ENCODE measurements at regions of chr2 and their contacts with region 1.

Region 1: GRCh38 chr2:240189686-240190085 is 49.2 kb upstream of the OTOS start:
- DNase-seq: no peak
- ATAC-seq: no peak
- H3K4me3 ChIP-seq: no peak overlapping the region
- H3K27ac ChIP-seq: no peak overlapping the region
- H3K4me1 ChIP-seq: peaks cover 3 to 15% of the 10 kb centered on the region in 2 donors
- H3K27me3 ChIP-seq: no peaks in the 10 kb centered on the region
- CTCF ChIP-seq: no peak
- POLR2A ChIP-seq: no peak

Region 2: DNA sequence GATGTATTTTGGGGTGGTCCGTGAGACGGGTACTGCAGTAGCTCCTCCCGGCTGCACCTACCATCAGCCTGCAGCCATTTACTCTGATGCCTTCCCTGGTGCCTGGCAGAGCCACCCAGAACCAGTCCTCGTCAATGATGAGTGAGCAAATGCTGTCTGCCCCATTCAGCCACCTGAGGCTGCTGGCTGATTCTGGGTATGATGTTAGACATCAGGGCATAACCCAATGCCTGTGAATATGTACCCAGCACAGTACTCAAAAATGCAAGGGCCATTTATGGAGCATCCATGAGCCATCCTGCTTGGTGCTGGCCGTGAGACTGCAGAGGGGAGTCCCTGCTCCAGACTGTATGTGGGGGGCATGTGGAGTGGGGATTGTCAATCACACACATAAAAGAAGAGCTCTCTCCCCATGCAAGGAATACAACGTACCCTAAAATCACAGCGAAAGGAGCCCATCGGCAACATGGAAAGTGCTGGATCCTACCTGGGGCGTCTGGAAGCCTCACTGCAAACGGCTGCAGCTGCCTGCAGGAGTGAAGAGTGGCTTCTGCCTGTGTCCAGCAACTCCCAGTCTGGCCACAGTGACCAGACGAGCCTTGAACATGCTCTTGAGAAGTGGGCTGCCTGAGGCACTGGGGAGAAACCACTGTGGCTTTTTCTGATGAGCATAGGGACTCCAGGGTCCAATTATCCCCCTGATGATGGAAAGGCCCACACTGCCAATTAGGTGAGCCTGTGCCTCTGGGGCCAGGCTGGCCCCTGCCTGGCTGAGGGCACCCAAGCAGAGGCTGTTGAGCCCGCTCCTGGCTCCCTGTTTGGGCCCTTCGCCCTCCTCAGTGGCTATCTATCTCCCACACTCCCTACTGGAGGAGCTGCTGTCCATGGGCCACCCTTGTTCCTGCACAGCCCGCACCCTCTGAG is 157.0 kb before region 1 on chr2:
- in situ Hi-C with region 1: no loop called
- intact Hi-C with region 1: no loop called
- DNase-seq: no peak
- ATAC-seq: no peak
- H3K4me3 ChIP-seq: no peak overlapping the region
- H3K27ac ChIP-seq: no peak overlapping the region
- H3K4me1 ChIP-seq: no peaks in the 10 kb centered on the region
- H3K27me3 ChIP-seq: peaks cover 0 to 3% (median 0%) of the 10 kb centered on the region in 3 donors
- CTCF ChIP-seq: no peak
- POLR2A ChIP-seq: no peak

Region 3: GRCh38 chr2:240136013-240136670 is 53.5 kb before region 1 on chr2 and contains the start of gene COPS9:
- in situ Hi-C with region 1: no loop called
- intact Hi-C with region 1: no loop called
- DNase-seq: peak; percentile 73 to 81
- ATAC-seq: peak; percentile 84 to 93
- H3K4me3 ChIP-seq: peak within 1 kb of the TSS; percentile 75 to 97 (median 90)
- H3K27ac ChIP-seq: peak within 1 kb of the TSS; percentile 71 to 89 (median 82)
- H3K4me1 ChIP-seq: peaks cover 23 to 26% of the 10 kb centered on the region in 2 donors
- H3K27me3 ChIP-seq: no peaks in the 10 kb centered on the region
- CTCF ChIP-seq: peak in 1 of 5 experiments; percentile 6
- POLR2A ChIP-seq: peak; percentile 52 to 72
- total RNA-seq, gene COPS9: 163 to 219 (median 193) TPM

Region 4: GRCh38 chr2:240149943-240150784 is 39.5 kb before region 1 on chr2:
- in situ Hi-C with region 1: no loop called
- intact Hi-C with region 1: loop called (anchors 5 kb)
- DNase-seq: no peak
- ATAC-seq: peak in 1 of 2 donors; percentile 55
- H3K4me3 ChIP-seq: no peak overlapping the region
- H3K27ac ChIP-seq: no peak overlapping the region
- H3K4me1 ChIP-seq: no peaks in the 10 kb centered on the region
- H3K27me3 ChIP-seq: no peaks in the 10 kb centered on the region
- CTCF ChIP-seq: peak; percentile 33 to 75 (median 56)
- POLR2A ChIP-seq: no peak

Measured in gastrocnemius medialis (tissue), 4 donors.